Left ventricle myocardium inferior (tissue), 1 donor: ENCODE measurements at regions of chr10 and their contacts with region 1.

Region 1: GRCh38 chr10:71396084-71396720 is 518 bp upstream of the CDH23 start:
- DNase-seq: peak; percentile 66
- H3K4me3 ChIP-seq: peak overlapping the region; percentile 72
- H3K27ac ChIP-seq: peak overlapping the region; percentile 71
- H3K4me1 ChIP-seq: peaks cover 21% of the 10 kb centered on the region
- H3K27me3 ChIP-seq: peaks cover 70% of the 10 kb centered on the region
- CTCF ChIP-seq: peak; percentile 83

Region 2: DNA sequence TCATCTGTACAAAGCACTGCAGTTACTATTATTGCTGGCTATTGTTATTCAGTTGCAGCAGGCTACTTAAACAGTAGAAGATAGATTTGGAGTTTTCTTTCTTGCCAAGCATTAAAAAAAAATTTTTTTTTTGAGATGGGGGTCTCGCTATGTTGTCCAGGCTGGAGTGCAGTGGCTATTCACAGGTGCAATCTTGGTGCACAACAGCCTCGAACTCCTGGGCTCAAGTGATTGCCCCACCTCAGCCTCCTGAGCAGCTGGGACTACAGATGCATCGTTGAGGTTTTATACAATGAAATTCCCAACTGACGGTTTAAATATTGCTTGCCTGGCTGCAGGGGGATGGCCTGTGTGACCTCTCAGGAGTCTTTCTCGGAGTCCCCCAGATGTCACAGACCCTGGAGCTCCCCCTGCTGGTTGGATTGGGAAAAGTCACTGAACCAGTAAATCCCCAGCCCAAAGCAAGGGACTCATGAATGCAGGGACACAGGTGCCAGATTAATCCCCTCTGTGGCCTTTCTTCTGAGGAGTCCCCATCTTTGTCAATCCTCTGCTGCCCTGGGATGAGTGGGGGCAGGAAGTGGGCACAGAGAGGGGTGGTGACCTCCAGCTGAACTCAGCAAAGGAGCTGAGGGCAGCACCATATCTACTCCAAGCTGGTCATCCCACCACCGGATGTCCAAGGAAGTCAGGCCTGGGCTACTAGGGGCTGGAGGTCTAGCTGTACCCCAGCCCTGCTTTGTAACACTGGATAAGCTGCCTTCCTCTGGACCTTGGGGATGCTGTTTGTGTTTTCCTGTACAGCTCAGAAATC is 173.8 kb after region 1 on chr10:
- intact Hi-C with region 1: loop called (anchors 2 kb)
- DNase-seq: peak; percentile 66
- H3K4me3 ChIP-seq: no peak overlapping the region
- H3K27ac ChIP-seq: no peak overlapping the region
- H3K4me1 ChIP-seq: peaks cover 1% of the 10 kb centered on the region
- H3K27me3 ChIP-seq: no peaks in the 10 kb centered on the region
- CTCF ChIP-seq: peak; percentile 88